CD14-positive monocyte (primary cell): ENCODE measurements at regions of chr11 and their contacts with region 1.

Region 1: DNA sequence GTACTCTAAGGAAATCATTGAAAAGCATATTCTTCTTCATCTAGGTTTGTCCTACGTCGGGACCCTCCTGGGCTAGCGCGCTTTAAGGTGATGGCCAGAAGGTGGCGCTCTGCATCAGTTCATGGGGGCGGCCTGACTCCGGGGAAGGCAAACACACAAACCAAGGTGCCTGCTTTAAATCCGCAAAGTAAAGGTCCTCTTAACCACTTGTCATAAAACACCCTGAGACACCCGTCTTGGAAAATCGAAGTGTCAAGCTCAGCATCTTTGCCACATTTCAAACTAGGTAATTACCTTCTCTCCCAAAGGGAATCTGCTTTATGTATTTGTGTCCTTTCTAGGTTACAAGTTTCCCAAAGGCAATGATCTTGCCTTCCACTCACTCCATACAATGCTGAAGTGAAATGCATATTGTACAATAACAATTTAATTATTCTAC is 33.9 kb downstream of the LMO2 start:
- DNase-seq: peak; percentile 70 to 76 (median 73)
- H3K4me3 ChIP-seq: no peak overlapping the region
- H3K4me3 Mint-ChIP-seq: no peak overlapping the region
- H3K27ac ChIP-seq: peak overlapping the region in 1 of 2 donors; percentile 44
- H3K27ac Mint-ChIP-seq: peak overlapping the region in 2 of 7 donors; percentile 47 to 49
- H3K4me1 ChIP-seq: peaks cover 0 to 12% of the 10 kb centered on the region in 2 donors
- H3K4me1 Mint-ChIP-seq: peaks cover 42% of the 10 kb centered on the region
- H3K27me3 ChIP-seq: no peaks in the 10 kb centered on the region
- H3K27me3 Mint-ChIP-seq: peaks cover 0 to 3% (median 0%) of the 10 kb centered on the region in 3 donors
- CTCF ChIP-seq: peak; percentile 95

Region 2: DNA sequence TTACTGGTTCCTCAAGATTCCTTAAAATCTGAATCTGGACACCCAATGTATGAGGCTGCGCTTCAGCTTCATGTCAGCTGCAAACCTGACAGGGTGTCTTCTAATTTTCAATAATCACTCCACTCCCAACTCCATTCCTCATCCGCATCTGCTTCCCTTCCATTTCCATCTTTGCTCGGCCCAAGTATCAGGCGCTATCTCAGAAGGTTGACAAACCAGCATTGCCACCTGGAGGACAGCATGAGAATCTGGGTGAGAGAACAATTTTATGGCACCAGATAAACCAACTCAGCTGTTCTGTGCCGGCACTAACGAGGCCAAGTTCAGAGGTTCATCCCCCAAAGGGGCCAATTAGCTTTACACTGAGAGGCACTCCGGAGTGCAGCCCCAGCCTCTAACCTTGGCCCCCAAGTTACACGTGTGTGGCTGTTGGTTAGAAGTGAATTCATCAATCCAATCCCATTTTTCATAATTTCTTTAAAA is 113.1 kb after region 1 on chr11:
- intact Hi-C with region 1: loop called (anchors 2 kb)
- DNase-seq: peak; percentile 62 to 72 (median 67)
- H3K4me3 ChIP-seq: no peak overlapping the region
- H3K4me3 Mint-ChIP-seq: peak overlapping the region in 1 of 2 donors; percentile 1
- H3K27ac ChIP-seq: no peak overlapping the region
- H3K27ac Mint-ChIP-seq: peak overlapping the region in 2 of 7 donors; percentile 13 to 47
- H3K4me1 ChIP-seq: peaks cover 7 to 8% of the 10 kb centered on the region in 2 donors
- H3K4me1 Mint-ChIP-seq: peaks cover 21% of the 10 kb centered on the region
- H3K27me3 ChIP-seq: no peaks in the 10 kb centered on the region
- H3K27me3 Mint-ChIP-seq: peaks cover 0 to 8% (median 0%) of the 10 kb centered on the region in 3 donors
- CTCF ChIP-seq: peak; percentile 72

Region 3: DNA sequence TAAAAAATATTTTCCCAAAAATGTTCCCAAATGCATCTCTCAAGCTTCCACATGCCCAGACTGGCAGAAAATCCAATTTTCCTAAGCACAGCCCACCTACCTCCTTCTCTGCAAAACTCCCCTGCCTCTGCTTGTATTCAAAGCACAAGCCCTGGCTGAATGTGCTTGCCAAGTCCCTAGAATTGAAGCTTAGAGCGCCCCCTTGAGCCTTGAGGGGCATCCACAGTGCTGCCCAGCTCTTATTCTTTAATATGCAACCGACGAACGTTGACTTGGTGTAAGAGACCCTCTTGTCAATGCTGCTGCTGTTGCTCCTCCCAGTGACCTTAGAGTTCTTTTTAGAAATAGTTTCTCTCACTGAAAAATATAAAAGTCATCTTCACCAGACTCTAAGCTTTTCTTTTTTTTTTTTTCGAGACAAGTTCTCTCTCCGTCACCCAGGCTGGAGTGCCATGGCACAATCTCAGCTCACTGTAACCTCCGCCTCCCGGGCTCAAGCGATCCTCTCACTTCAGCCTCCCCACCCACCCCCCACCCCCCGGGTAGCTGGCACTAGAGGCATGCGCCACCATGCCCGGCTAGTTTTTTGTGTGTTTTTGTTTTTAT is 130.1 kb after region 1 on chr11:
- intact Hi-C with region 1: loop called in 1 of 2 experiments (anchors 2 kb)
- DNase-seq: peak; percentile 72 to 86 (median 81)
- H3K4me3 ChIP-seq: no peak overlapping the region
- H3K4me3 Mint-ChIP-seq: no peak overlapping the region
- H3K27ac ChIP-seq: no peak overlapping the region
- H3K27ac Mint-ChIP-seq: no peak overlapping the region
- H3K4me1 ChIP-seq: no peaks in the 10 kb centered on the region
- H3K4me1 Mint-ChIP-seq: peaks cover 5% of the 10 kb centered on the region
- H3K27me3 ChIP-seq: no peaks in the 10 kb centered on the region
- H3K27me3 Mint-ChIP-seq: peaks cover 0 to 7% (median 3%) of the 10 kb centered on the region in 3 donors
- CTCF ChIP-seq: peak; percentile 93